Naive thymus-derived CD4-positive, alpha-beta T cell (primary cell): ENCODE measurements at regions of chr11 and their contacts with region 1.

Region 1: GRCh38 chr11:75204685-75205563 is 35.6 kb upstream of the TPBGL start:
- DNase-seq: peak; percentile 53 to 86 (median 64)
- ATAC-seq: peak; percentile 92
- H3K4me3 ChIP-seq: no peak overlapping the region
- H3K4me3 Mint-ChIP-seq: no peak overlapping the region
- H3K27ac ChIP-seq: no peak overlapping the region
- H3K27ac Mint-ChIP-seq: no peak overlapping the region
- H3K4me1 ChIP-seq: no peaks in the 10 kb centered on the region
- H3K4me1 Mint-ChIP-seq: peaks cover 0 to 2% (median 0%) of the 10 kb centered on the region in 7 donors
- H3K27me3 ChIP-seq: peaks cover 0 to 2% of the 10 kb centered on the region in 2 donors
- H3K27me3 Mint-ChIP-seq: peaks cover 0 to 9% (median 6%) of the 10 kb centered on the region in 5 donors

Region 2: DNA sequence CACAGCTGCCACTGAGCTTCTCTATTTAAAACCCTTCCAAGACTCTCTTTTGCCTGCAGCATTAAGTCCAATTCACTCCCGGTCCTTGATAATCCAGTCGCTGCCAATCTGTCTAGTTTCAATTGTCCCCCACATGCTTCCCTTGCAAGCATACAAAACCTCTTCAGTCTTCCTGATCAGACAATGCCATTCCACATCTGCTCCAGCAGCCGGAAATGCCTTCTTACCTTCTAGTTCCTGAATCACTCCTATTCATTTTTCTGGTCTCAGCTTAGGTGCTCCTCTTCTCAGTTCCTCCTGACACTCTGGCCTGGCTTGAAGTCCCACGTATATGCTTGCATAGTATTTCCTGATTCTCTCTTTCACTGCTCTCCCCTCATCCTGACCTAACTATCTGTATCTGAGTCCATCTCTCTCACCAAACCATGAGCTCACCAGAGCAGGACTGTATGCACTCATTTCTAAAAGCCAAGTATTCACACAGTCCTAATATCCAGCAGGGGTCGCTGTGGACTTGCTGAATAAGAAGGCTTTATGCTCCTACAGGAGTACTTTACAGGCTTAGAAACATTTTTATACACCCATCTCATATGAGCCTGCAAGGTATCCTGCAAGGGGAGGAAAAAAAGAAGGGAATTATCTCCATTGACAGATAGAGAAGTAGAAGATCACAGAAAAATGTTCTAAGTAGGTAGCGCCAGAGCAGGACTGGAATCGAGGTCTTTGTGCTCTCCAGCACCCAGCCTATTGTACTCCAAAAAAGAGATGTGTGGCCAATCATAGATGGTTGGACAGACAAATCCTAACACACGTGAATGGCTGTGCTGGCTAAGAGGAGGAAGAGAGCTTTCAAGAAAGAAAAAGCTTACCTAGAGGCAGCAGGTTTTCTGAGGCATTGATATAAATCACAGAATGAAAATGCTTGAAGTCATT is 275.2 kb before region 1 on chr11:
- CTCF ChIA-PET with region 1: interaction called, 5 read pairs
- POLR2A ChIA-PET with region 1: no interaction called
- intact Hi-C with region 1: loop called (anchors 1 to 2 kb)
- DNase-seq: peak; percentile 9 to 74 (median 59)
- ATAC-seq: peak; percentile 92
- H3K4me3 ChIP-seq: no peak overlapping the region
- H3K4me3 Mint-ChIP-seq: no peak overlapping the region
- H3K27ac ChIP-seq: no peak overlapping the region
- H3K27ac Mint-ChIP-seq: no peak overlapping the region
- H3K4me1 ChIP-seq: no peaks in the 10 kb centered on the region
- H3K4me1 Mint-ChIP-seq: peaks cover 0 to 36% (median 0%) of the 10 kb centered on the region in 7 donors
- H3K27me3 ChIP-seq: no peaks in the 10 kb centered on the region
- H3K27me3 Mint-ChIP-seq: no peaks in the 10 kb centered on the region

Region 3: GRCh38 chr11:75022759-75023396 is 182.0 kb before region 1 on chr11:
- CTCF ChIA-PET with region 1: interaction called, 10 read pairs
- POLR2A ChIA-PET with region 1: no interaction called
- intact Hi-C with region 1: loop called in 1 of 2 experiments (anchors 1 kb)
- DNase-seq: peak; percentile 38 to 71 (median 66)
- ATAC-seq: peak; percentile 88
- H3K4me3 ChIP-seq: no peak overlapping the region
- H3K4me3 Mint-ChIP-seq: no peak overlapping the region
- H3K27ac ChIP-seq: no peak overlapping the region
- H3K27ac Mint-ChIP-seq: no peak overlapping the region
- H3K4me1 ChIP-seq: no peaks in the 10 kb centered on the region
- H3K4me1 Mint-ChIP-seq: no peaks in the 10 kb centered on the region
- H3K27me3 ChIP-seq: no peaks in the 10 kb centered on the region
- H3K27me3 Mint-ChIP-seq: no peaks in the 10 kb centered on the region

Region 4: DNA sequence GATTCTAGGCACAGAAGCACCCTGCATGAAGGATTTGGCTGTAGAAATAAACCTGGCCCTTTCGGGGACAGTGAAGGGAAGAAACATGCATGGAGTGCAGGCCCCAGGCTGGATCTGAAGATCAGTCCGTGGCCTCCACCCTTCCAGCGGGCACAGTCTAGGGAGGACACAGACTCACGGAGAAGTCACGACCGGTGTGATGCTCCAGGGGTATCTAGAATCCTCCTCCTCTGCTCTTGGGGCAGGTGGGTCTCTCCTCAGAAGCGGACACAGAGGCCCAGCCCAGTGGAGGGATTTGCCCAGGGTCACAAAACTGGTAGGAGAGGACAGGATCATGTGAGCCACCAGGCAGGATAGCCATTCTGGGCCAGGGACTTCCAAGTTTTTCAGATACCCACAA is 31.6 kb before region 1 on chr11:
- CTCF ChIA-PET with region 1: no interaction called
- POLR2A ChIA-PET with region 1: no interaction called
- intact Hi-C with region 1: no loop called
- DNase-seq: no peak
- ATAC-seq: no peak
- H3K4me3 ChIP-seq: no peak overlapping the region
- H3K4me3 Mint-ChIP-seq: no peak overlapping the region
- H3K27ac ChIP-seq: no peak overlapping the region
- H3K27ac Mint-ChIP-seq: no peak overlapping the region
- H3K4me1 ChIP-seq: no peaks in the 10 kb centered on the region
- H3K4me1 Mint-ChIP-seq: peaks cover 6 to 17% (median 13%) of the 10 kb centered on the region in 7 donors
- H3K27me3 ChIP-seq: no peaks in the 10 kb centered on the region
- H3K27me3 Mint-ChIP-seq: peaks cover 0 to 4% (median 0%) of the 10 kb centered on the region in 5 donors